Left cardiac atrium (tissue), 4 donors: ENCODE measurements at regions of chr6 and their contacts with region 1.

Region 1: GRCh38 chr6:71012866-71013469 is 56.1 kb upstream of the B3GAT2 start:
- DNase-seq: no peak
- ATAC-seq: peak; percentile 50 to 84

Region 2: DNA sequence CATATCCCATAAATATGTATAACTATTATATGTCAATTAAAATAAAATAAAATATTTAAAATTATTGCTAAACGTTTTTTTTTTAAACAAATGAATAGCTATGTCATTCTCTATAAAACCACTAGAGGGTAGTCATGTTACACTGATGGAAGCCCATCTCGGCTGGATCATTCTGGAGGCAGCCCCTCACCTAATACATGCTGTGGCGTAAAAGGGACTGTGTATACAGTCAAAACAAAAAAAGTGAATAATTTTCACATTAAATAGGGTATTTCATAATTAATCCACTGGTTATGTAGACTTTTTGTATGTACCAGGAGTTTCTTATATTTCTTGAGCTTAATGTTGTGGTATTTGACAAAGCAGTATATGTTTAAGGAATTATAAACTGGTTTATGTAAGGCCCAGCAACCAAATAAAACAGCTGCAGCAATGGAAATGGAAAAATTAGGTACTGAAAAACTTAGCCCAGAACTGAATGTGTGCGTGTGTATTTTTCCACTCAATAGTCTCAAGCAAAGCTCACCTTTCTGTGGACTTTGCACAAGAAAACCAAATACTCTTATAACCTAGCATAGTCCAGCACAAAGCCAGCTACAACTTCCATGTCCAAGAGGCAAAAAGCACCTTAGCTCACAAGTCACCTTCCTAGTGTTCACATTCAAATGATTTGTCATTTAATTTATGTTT is 791.8 kb before region 1 on chr6:
- intact Hi-C with region 1: loop called in 1 of 2 experiments (anchors 5 kb)
- DNase-seq: no peak
- ATAC-seq: peak; percentile 37 to 62

Region 3: GRCh38 chr6:70234561-70235236 is 778.3 kb before region 1 on chr6:
- intact Hi-C with region 1: no loop called
- DNase-seq: no peak
- ATAC-seq: no peak

Region 4: GRCh38 chr6:70304616-70305015 is 708.4 kb before region 1 on chr6:
- intact Hi-C with region 1: loop called in 1 of 2 experiments (anchors 10 kb)
- DNase-seq: no peak
- ATAC-seq: no peak

Region 5: DNA sequence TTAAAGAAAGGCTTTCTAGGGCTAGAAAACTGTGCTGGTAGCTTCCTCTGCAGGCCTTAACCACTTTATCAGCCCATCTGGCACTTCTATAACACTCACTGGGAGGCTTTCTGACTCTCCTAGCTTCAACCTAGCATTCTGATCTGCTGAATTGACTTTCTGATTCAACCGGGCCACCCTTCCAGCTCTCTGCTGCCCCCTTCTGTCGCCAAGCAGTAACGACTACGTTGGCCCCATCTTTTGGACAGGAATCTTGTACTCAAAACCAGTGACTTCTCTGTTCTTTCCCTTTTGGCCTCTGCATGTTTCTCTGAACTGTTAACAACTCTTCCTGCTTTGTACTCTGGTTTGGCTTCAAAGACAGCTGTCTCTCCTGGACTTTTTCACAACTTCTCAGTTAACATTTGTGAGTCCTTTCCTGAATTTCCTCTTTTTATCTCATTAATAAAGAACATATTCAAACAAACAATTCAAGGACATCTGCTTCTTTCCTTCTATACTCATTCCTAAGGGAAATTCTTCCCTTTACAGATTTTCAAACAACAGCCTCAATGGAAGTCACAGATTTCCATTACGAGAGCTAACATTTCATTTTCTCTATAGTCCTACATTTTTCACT is 643.5 kb before region 1 on chr6:
- intact Hi-C with region 1: loop called in 1 of 2 experiments (anchors 1 kb)
- DNase-seq: no peak
- ATAC-seq: peak; percentile 78 to 79

Region 6: DNA sequence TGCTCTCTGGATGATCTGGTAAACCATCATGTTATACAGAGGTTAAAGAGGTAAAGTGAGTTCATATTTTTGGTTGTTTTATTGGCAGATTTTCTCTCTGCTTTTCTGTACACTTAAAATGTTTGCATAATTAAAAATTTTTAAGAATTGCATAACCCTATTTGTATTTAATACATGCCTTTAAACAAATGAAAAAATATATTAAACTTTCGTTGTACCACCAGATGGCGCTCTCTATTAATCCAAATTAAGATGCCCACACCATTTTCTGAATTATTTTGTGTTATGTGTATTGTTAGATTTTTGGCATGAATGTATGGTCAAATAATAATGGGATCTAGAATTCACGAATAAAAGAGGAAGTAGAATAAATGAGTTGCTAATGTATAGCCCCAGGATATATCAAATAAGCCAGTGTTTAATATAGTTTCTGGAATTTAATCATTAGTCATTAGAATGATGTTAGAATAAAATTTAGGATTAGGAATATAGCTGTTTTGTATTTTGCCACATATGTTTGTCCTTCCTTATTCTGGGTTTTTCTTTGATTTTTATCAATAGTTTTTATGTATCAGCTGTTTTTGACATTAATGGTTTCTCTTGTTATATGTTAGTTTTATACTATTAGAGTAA is 306.4 kb before region 1 on chr6:
- intact Hi-C with region 1: loop called in 1 of 2 experiments (anchors 10 kb)
- DNase-seq: no peak
- ATAC-seq: no peak

Region 7: DNA sequence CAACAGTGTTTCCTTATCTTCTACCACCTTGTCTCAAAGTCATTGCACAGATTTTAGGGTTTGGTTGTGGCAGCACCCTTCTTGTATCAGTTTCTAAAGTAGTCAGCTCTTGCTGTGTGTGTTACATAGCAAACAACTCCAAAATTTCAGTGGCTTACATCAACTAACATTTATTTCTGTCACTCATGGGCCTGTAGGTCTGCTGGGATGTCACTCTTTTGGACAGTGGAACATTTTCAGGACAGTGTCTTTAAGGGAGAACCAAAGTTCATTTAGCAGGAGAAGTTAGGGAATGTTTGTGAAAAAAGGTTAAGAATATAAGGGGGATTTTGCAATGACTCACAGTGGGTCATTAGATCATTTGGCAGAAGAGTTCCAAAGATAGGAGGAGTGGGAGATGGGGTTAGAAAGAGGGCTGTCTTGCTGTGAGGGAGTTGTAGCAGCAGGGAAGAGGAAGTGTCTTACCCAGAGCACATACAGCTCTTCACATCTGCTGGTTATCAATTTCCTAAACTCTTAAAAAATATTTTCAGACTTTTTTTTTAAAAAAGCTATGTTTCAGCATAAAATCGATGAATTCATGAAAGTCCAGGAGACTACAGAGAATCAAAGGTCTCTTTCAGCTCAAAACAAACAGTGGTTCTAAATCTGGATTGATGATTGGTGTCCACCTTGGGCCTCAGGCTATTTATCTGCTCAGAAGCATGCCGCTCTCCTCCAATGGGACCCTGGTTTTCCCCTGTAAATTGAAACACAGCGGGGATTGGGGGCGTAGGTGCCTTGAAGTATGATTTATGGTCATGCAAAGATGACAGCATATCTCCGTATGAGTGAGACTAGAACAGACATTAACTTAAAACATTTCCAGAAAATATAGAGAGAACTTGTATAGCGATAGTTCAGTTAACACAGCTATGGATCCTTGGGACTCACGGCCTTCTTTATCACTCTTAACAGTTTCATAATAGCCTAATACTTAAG is 173.4 kb before region 1 on chr6:
- intact Hi-C with region 1: no loop called
- DNase-seq: no peak
- ATAC-seq: peak in 1 of 2 donors; percentile 30